ENCODE measurements at regions of chr19 and their contacts with region 1.

Region 1: DNA sequence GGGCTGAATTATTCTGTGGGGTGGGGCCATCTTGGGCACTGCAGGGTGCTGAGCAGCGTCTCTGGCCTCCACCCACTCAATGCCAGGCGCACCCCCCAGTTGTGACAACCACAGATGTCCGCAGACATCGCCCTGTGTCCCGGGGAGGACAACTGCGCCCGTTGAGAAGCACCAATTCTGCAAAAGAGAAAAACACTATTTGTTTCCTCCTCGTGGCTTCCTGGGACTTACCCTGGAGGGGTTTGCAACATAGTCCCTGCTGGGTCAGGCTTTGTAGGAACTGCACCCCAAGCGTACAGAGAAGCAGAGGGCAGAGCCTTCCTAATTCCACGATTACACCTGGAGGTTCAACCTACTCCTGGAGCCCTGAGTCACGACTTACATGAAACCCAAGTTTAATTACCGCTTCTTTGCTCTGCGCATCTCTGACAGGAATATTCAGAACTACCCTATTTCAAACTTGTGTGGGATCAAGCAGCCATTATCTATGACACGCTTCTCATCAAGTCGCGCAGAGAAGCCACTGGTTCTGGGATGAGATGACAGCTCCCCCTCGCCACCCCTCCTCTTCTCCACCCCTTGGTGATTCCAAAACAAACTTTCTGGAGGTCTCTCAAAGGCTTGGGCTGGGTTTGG is 11.1 kb upstream of the SLC39A3 start:
- DNase-seq: no peak
- ATAC-seq: no peak

Region 2: DNA sequence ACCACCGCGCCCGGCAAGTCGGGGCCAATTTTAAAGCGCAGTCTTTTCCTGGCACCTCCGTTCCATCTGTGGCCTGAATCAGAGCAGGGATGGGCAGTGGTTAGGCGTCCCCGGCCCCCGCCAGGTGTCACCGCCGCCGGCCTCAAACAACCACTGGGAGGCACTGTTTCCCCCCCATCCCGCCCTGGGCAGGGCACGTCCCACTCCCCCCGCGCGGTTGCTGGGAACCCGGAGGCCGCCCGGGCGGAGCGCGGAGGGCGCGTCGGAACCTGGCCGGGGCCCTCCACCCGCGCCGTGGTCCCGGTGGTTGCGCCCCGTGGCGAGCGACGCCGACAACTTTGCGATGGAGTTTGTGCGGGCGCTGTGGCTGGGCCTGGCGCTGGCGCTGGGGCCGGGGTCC is 1750.8 kb before region 1 on chr19 and contains the start of gene GRIN3B:
- intact Hi-C with region 1: loop called (anchors 5 kb)
- DNase-seq: no peak
- ATAC-seq: no peak
- total RNA-seq, gene GRIN3B: not detected

Region 3: DNA sequence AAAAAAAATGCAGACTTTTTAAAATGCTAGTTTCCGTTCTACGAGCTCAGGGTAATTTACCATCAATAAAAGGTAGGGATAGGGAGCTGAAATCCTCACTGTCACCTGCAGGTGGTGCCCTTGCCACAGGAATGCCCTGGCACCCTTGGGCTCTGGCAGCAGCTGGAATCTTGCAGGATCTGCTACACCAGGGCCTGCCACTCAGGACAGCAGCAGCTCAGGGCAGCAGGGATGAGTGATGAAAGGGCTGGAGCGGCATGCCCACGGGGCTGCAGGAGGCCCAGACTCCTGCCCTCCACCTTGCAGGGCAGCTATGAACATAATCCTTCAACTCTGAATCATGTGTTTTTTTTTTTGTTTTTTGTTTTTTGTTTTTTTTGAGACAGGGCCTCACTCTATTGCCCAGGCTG is 102.4 kb before region 1 on chr19:
- intact Hi-C with region 1: loop called (anchors 10 kb)
- DNase-seq: peak; percentile 83
- ATAC-seq: peak; percentile 78

Region 4: DNA sequence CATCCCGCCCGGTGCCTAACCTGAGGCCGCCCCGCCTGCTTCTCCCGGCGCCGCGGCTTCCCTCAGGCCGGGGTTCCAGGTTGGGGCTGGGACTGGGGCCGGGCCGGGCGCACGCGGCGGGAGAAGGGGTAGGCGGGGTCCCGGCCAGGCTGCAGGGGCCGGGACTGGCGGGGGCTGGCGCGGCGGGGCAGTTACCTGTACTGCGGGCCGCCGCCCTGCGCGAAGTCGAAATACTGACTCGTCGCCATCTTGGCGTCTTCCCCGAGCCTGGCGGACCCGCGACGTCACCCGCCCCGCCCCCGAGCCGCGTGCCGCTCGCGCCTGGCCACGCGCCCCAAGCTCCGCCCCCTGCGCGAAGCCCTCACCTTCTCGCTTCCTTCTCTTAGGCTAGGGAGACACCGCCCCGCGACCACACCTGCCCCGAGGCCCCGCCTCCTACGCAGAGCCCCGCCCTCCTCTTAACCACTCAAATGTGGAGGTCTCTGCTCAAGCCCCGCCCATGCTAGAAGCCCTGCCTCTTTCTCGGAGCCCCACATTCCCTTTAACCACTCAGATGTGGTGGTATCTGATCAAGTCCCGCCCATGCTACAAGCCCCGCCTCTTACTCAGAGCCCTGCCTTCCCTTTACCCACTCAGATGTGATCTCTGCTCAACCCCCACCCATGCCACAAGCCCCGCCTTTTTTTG is 1118.0 kb after region 1 on chr19 and contains the start of gene ZFR2:
- intact Hi-C with region 1: no loop called
- DNase-seq: no peak
- ATAC-seq: no peak
- total RNA-seq, gene ZFR2: 0.31 TPM

Region 5: GRCh38 chr19:4232958-4233853 is 1482.3 kb after region 1 on chr19:
- intact Hi-C with region 1: loop called (anchors 5 kb)
- DNase-seq: peak; percentile 72
- ATAC-seq: peak; percentile 38

Measured in sciatic nerve (tissue), 2 donors.